ENCODE measurements at regions of chr15 and their contacts with region 1.

Region 1: DNA sequence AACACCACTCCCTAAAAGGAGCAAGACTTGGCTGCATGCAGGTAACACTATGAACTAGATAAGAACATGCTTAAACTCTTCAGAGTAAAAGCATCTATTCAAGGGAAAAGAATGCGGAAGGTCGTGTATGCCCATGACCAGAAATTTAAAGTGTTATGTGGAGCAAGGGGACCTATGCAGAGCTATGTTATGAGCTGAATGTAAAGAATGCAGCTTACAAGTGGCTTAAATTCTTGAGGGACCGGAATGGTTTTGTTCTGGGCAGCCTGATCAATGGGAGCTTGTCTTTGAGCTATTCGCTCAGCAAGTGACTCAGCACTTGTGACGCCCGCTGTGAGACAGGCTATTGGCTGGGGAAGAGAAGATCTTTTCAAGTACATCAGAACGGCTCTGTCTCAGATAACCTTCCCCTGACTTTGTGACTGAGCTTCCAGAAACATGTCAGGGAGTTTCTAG is 367.5 kb upstream of the THBS1 start:
- DNase-seq: no peak
- H3K4me3 ChIP-seq: no peak overlapping the region
- H3K27ac ChIP-seq: no peak overlapping the region
- H3K4me1 ChIP-seq: no peaks in the 10 kb centered on the region
- H3K27me3 ChIP-seq: no peaks in the 10 kb centered on the region
- CTCF ChIP-seq: no peak
- POLR2A ChIP-seq: no peak

Region 2: DNA sequence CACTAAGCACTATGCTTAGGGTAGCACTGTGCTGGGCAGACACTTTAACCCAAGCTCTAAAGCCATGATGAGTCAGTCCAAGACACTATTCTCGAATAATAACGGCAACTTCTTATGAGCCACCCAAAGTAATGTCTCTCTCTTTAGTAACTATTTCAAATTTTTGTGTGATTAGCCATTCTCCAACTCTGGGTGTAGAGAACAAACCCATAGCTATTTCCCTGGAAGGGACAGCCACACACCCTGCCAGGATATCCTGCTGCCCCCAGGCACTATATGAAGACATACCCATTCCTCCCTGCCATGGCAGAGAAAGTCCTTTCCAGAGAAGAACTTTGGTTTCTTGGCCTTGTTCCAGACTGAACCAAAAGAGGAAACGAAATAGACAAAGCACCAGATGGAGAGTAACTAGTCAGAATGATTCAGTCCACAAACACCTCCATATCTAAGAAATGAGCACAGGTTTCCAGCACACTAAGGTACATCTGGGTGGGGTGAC is 17.4 kb before region 1 on chr15:
- CTCF ChIA-PET with region 1: interaction called, 14 read pairs
- POLR2A ChIA-PET with region 1: no interaction called
- dilution Hi-C with region 1: no loop called
- intact Hi-C with region 1: no loop called
- DNase-seq: peak; percentile 37
- H3K4me3 ChIP-seq: no peak overlapping the region
- H3K27ac ChIP-seq: peak overlapping the region; percentile 46
- H3K4me1 ChIP-seq: peaks cover 34% of the 10 kb centered on the region
- H3K27me3 ChIP-seq: no peaks in the 10 kb centered on the region
- CTCF ChIP-seq: no peak
- POLR2A ChIP-seq: no peak